Calu3 (cell line): ENCODE measurements at regions of chr17 and their contacts with region 1.

Region 1: GRCh38 chr17:39872751-39873150 is 4.7 kb downstream of the ZPBP2 start:
- DNase-seq: peak; percentile 78
- H3K4me3 Mint-ChIP-seq: no peak overlapping the region
- H3K27ac Mint-ChIP-seq: no peak overlapping the region
- H3K4me1 Mint-ChIP-seq: no peaks in the 10 kb centered on the region
- H3K27me3 Mint-ChIP-seq: peaks cover 11% of the 10 kb centered on the region
- CTCF ChIP-seq: no peak

Region 2: DNA sequence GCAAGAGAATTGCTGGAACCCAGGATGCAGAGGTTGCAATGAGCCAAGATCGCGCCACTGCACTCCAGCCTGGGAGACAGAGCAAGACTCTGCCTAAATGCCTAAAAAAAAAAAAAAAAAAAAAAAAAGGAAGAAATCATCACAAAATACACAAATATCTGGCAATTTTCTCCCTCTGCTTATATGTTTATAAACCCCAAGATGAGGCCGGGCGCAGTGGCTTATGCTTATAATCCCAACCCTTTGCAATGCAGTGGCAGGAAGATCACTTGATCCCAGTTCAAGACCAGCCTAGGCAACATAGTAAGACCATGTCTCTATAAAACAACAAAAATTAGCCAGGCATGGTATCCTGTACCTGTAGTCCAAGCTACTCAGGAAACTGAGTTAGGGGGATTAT is 443.2 kb before region 1 on chr17:
- CTCF ChIA-PET with region 1: no interaction called
- intact Hi-C with region 1: no loop called
- DNase-seq: no peak
- H3K4me3 Mint-ChIP-seq: no peak overlapping the region
- H3K27ac Mint-ChIP-seq: no peak overlapping the region
- H3K4me1 Mint-ChIP-seq: no peaks in the 10 kb centered on the region
- H3K27me3 Mint-ChIP-seq: no peaks in the 10 kb centered on the region
- CTCF ChIP-seq: no peak

Region 3: DNA sequence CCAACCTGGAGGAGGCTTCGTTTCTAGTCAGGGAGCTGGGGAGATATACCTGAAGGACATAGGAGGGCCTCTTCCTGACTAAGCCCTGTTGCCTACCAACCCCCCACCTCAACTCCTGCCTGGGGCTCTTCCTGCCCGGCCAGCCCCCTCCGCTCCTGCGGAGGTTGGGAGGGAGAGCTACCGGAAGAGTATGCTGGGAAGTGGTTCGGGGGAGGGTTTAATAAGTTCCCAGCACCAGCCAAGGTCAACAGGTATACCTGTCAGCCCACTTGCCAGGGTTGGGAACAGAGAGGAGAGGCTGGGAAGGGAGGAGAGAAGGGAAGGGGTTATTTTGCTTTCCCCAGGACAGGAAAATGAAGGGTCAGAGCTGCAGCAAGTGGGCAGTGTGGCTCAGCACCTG is 241.3 kb before region 1 on chr17:
- CTCF ChIA-PET with region 1: interaction called, 15 read pairs
- intact Hi-C with region 1: no loop called
- DNase-seq: no peak
- H3K4me3 Mint-ChIP-seq: peak overlapping the region; percentile 0
- H3K27ac Mint-ChIP-seq: peak overlapping the region; percentile 0
- H3K4me1 Mint-ChIP-seq: peaks cover 34% of the 10 kb centered on the region
- H3K27me3 Mint-ChIP-seq: peaks cover 59% of the 10 kb centered on the region
- CTCF ChIP-seq: no peak

Region 4: DNA sequence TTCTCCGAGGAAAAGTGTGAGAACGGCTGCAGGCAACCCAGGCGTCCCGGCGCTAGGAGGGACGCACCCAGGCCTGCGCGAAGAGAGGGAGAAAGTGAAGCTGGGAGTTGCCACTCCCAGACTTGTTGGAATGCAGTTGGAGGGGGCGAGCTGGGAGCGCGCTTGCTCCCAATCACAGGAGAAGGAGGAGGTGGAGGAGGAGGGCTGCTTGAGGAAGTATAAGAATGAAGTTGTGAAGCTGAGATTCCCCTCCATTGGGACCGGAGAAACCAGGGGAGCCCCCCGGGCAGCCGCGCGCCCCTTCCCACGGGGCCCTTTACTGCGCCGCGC is 173.0 kb before region 1 on chr17 and contains the start of gene ERBB2:
- CTCF ChIA-PET with region 1: interaction called, 76 read pairs
- intact Hi-C with region 1: no loop called
- DNase-seq: peak; percentile 100
- H3K4me3 Mint-ChIP-seq: peak within 1 kb of the TSS; percentile 71
- H3K27ac Mint-ChIP-seq: peak within 1 kb of the TSS; percentile 67
- H3K4me1 Mint-ChIP-seq: peaks cover 68% of the 10 kb centered on the region
- H3K27me3 Mint-ChIP-seq: no peaks in the 10 kb centered on the region
- CTCF ChIP-seq: no peak
- total RNA-seq, gene ERBB2: 4,829 and 4,830 TPM in 2 replicates

Region 5: DNA sequence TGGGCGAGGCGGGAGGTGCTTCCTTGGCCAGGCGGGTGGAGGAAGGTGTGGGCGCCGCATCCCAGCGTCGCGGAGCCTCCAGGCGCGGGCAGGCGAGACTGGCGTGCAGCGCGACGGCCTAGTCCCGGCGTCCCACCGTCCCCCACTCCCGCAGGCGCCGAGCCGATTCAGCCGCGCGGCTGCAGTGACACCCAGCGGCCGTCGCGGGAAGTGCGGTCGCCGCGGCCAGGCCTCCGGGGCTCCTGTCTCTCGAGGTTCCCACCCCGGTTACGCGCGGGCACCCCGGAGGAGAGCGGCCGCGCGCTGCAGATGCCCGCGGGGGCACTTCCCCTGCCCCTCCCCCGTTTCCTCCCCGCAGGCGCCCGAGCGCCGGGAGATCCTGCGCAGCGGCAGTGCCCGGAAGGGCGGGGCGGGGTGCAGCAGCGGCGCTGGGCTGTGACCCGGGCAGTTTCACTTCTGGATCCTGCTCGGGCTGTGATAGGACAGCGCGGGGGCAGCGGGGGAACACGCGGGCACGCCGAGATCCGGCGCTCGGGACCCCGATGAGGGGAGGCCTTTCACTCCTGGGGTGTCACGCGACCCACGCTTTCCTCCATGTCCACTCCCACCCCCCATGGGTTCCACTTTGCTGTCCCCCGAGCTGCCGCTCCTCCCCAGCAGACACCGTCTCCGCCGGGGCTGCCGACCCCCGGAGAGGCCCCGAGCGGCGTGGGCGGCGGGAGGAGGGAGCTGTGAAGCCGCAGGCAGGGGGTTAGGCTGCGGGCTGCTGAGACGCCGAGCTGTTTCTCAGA is 118.4 kb before region 1 on chr17:
- CTCF ChIA-PET with region 1: interaction called, 75 read pairs
- intact Hi-C with region 1: no loop called
- DNase-seq: peak; percentile 100
- H3K4me3 Mint-ChIP-seq: peak overlapping the region; percentile 63
- H3K27ac Mint-ChIP-seq: peak overlapping the region; percentile 12
- H3K4me1 Mint-ChIP-seq: peaks cover 58% of the 10 kb centered on the region
- H3K27me3 Mint-ChIP-seq: peaks cover 35% of the 10 kb centered on the region
- CTCF ChIP-seq: no peak

Region 6: DNA sequence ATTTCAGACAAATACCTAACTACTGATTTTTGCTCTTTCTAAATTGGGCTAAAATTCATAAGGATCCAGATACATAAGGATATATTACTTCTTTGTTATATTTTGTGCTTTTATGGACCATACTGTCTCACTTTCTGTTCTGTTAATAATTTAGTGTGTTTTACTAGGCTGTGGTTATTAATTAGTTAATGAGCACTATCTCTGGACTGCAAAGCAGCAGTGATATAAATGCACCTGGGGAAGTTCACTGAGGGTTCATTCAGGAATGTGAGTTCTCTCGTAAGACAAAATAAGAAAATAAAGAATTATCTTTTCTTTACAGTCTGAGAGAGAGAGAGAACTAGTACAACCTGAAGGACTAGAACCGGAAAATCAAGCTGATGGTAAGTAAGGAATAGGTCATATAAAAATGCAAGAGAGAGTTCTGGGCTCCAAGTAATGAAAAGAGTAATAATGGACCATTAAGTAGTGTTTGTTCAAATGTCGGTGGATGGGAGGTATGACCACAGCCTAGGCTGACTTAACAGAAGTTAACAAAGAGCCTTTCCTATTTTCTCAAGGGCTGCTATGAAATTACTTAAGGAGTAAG is 64.2 kb before region 1 on chr17:
- CTCF ChIA-PET with region 1: interaction called, 79 read pairs
- intact Hi-C with region 1: no loop called
- DNase-seq: peak; percentile 98
- H3K4me3 Mint-ChIP-seq: peak overlapping the region; percentile 1
- H3K27ac Mint-ChIP-seq: peak overlapping the region; percentile 16
- H3K4me1 Mint-ChIP-seq: peaks cover 37% of the 10 kb centered on the region
- H3K27me3 Mint-ChIP-seq: no peaks in the 10 kb centered on the region
- CTCF ChIP-seq: no peak

Region 7: GRCh38 chr17:39852239-39852638 is 20.5 kb before region 1 on chr17:
- CTCF ChIA-PET with region 1: interaction called, 293 read pairs
- intact Hi-C with region 1: no loop called
- DNase-seq: peak; percentile 59
- H3K4me3 Mint-ChIP-seq: no peak overlapping the region
- H3K27ac Mint-ChIP-seq: no peak overlapping the region
- H3K4me1 Mint-ChIP-seq: peaks cover 10% of the 10 kb centered on the region
- H3K27me3 Mint-ChIP-seq: no peaks in the 10 kb centered on the region
- CTCF ChIP-seq: no peak

Region 8: GRCh38 chr17:39946551-39947330 is 74.0 kb after region 1 on chr17:
- CTCF ChIA-PET with region 1: interaction called, 27 read pairs
- intact Hi-C with region 1: no loop called
- DNase-seq: peak; percentile 86
- H3K4me3 Mint-ChIP-seq: no peak overlapping the region
- H3K27ac Mint-ChIP-seq: no peak overlapping the region
- H3K4me1 Mint-ChIP-seq: peaks cover 39% of the 10 kb centered on the region
- H3K27me3 Mint-ChIP-seq: peaks cover 57% of the 10 kb centered on the region
- CTCF ChIP-seq: no peak